Calu3 (cell line): ENCODE measurements at regions of chr3 and their contacts with region 1.

Region 1: DNA sequence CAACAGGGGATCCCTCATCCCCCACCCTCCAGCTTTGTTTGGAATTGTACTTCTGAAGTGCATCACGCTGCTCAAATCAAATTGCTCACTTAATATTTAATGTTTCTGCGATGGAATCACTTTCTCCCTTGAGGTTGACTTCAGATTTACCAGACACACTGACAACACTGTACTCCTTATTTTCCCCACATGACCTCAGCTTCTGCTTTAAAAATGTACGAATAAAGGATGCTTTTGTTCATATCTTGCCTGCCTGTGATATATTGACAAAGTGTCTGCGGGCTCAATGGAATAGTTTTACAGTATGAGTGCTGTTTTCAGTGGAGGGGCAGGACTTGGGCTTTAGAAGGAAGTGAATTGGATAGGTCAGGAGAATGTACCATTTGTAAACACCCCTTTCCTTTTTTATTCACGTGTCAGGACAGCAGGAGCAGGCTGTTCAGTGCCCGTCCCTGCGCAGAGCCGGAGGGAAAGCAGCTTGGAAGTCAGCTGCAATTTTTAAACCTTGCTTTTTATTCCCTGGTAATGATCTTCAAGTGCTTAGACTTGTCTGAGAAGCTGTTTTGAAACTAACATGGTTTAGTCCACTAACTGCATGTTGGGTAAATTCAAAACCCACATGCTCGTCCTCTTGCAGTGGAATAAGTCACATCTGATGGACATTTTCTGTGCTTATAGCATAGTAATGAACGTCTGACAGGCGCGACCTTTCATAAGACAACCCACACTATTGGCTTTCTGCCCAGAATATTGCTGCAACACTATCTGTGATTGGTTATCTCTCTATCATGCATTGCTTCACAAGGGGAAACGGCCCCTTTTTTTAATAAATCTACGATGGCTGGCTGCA is 29.9 kb downstream of the MBNL1 start:
- DNase-seq: peak; percentile 78
- H3K4me3 Mint-ChIP-seq: peak overlapping the region; percentile 73
- H3K27ac Mint-ChIP-seq: peak overlapping the region; percentile 95
- H3K4me1 Mint-ChIP-seq: peaks cover 49% of the 10 kb centered on the region
- H3K27me3 Mint-ChIP-seq: no peaks in the 10 kb centered on the region
- CTCF ChIP-seq: no peak

Region 2: GRCh38 chr3:152193673-152194267 is 104.8 kb before region 1 on chr3:
- CTCF ChIA-PET with region 1: no interaction called
- intact Hi-C with region 1: no loop called
- DNase-seq: peak; percentile 9
- H3K4me3 Mint-ChIP-seq: peak overlapping the region; percentile 68
- H3K27ac Mint-ChIP-seq: peak overlapping the region; percentile 23
- H3K4me1 Mint-ChIP-seq: peaks cover 8% of the 10 kb centered on the region
- H3K27me3 Mint-ChIP-seq: no peaks in the 10 kb centered on the region
- CTCF ChIP-seq: no peak

Region 3: GRCh38 chr3:152309535-152310307 is 11.1 kb after region 1 on chr3:
- CTCF ChIA-PET with region 1: interaction called, 10 read pairs
- intact Hi-C with region 1: no loop called
- DNase-seq: no peak
- H3K4me3 Mint-ChIP-seq: no peak overlapping the region
- H3K27ac Mint-ChIP-seq: peak overlapping the region; percentile 72
- H3K4me1 Mint-ChIP-seq: peaks cover 59% of the 10 kb centered on the region
- H3K27me3 Mint-ChIP-seq: no peaks in the 10 kb centered on the region
- CTCF ChIP-seq: no peak